Sigmoid colon (tissue), 7 donors: ENCODE measurements at regions of chr6 and their contacts with region 1.

Region 1: GRCh38 chr6:83057705-83058321 is 7.8 kb downstream of the UBE3D start:
- DNase-seq: no peak
- H3K4me3 ChIP-seq: no peak overlapping the region
- H3K27ac ChIP-seq: no peak overlapping the region
- H3K4me1 ChIP-seq: peaks cover 0 to 7% (median 0%) of the 10 kb centered on the region in 4 donors
- H3K27me3 ChIP-seq: no peaks in the 10 kb centered on the region
- CTCF ChIP-seq: peak in 2 of 4 experiments; percentile 38 to 52
- EP300 ChIP-seq: no peak
- POLR2A ChIP-seq: no peak

Region 2: GRCh38 chr6:82247634-82248232 is 810.1 kb before region 1 on chr6 and contains the start of gene IBTK:
- intact Hi-C with region 1: loop called (anchors 5 kb)
- DNase-seq: peak; percentile 97
- H3K4me3 ChIP-seq: peak within 1 kb of the TSS; percentile 70 to 94 (median 82)
- H3K27ac ChIP-seq: peak within 1 kb of the TSS; percentile 89 to 97 (median 92)
- H3K4me1 ChIP-seq: peaks cover 0 to 41% (median 25%) of the 10 kb centered on the region in 4 donors
- H3K27me3 ChIP-seq: no peaks in the 10 kb centered on the region
- CTCF ChIP-seq: no peak
- EP300 ChIP-seq: no peak
- POLR2A ChIP-seq: peak; percentile 52 to 83
- total RNA-seq, gene IBTK: 19.9 to 26.2 (median 25.4) TPM

Region 3: GRCh38 chr6:82270881-82271645 is 786.8 kb before region 1 on chr6:
- intact Hi-C with region 1: loop called (anchors 2 kb)
- DNase-seq: no peak
- H3K4me3 ChIP-seq: no peak overlapping the region
- H3K27ac ChIP-seq: no peak overlapping the region
- H3K4me1 ChIP-seq: no peaks in the 10 kb centered on the region
- H3K27me3 ChIP-seq: no peaks in the 10 kb centered on the region
- CTCF ChIP-seq: peak in 2 of 4 experiments; percentile 36 to 50
- EP300 ChIP-seq: no peak
- POLR2A ChIP-seq: no peak

Region 4: GRCh38 chr6:82363351-82364086 is 694.3 kb before region 1 on chr6 and contains the start of gene TPBG:
- intact Hi-C with region 1: loop called (anchors 5 kb)
- DNase-seq: peak; percentile 70
- H3K4me3 ChIP-seq: peak within 1 kb of the TSS; percentile 39 to 69 (median 56)
- H3K27ac ChIP-seq: peak within 1 kb of the TSS; percentile 64 to 91 (median 73)
- H3K4me1 ChIP-seq: peaks cover 0 to 33% (median 20%) of the 10 kb centered on the region in 4 donors
- H3K27me3 ChIP-seq: peaks cover 8 to 50% (median 17%) of the 10 kb centered on the region in 3 donors
- CTCF ChIP-seq: no peak
- EP300 ChIP-seq: no peak
- POLR2A ChIP-seq: no peak
- total RNA-seq, gene TPBG: 6.1 to 10.8 (median 6.4) TPM